Activated CD4-positive, alpha-beta T cell treated with anti-CD3 and anti-CD28 coated beads for 36 hours (primary cell): ENCODE measurements at regions of chr20 and their contacts with region 1.

Region 1: GRCh38 chr20:21505161-21505809 is 8.6 kb downstream of the NKX2-2 start:
- DNase-seq: peak; percentile 90
- ATAC-seq: peak; percentile 70
- H3K4me3 Mint-ChIP-seq: peak overlapping the region; percentile 52
- H3K27ac Mint-ChIP-seq: peak overlapping the region; percentile 8
- H3K4me1 Mint-ChIP-seq: peaks cover 25% of the 10 kb centered on the region
- H3K27me3 Mint-ChIP-seq: peaks cover 52% of the 10 kb centered on the region

Region 2: GRCh38 chr20:20837574-20838021 is 667.7 kb before region 1 on chr20:
- CTCF ChIA-PET with region 1: interaction called, 3 read pairs
- POLR2A ChIA-PET with region 1: no interaction called
- intact Hi-C with region 1: loop called (anchors 1 to 5 kb)
- DNase-seq: peak; percentile 74
- ATAC-seq: no peak
- H3K4me3 Mint-ChIP-seq: no peak overlapping the region
- H3K27ac Mint-ChIP-seq: no peak overlapping the region
- H3K4me1 Mint-ChIP-seq: peaks cover 3% of the 10 kb centered on the region
- H3K27me3 Mint-ChIP-seq: peaks cover 8% of the 10 kb centered on the region

Region 3: GRCh38 chr20:21099751-21100577 is 405.3 kb before region 1 on chr20:
- CTCF ChIA-PET with region 1: interaction called, 3 read pairs
- POLR2A ChIA-PET with region 1: no interaction called
- intact Hi-C with region 1: loop called (anchors 2 kb)
- DNase-seq: peak; percentile 71
- ATAC-seq: peak; percentile 53
- H3K4me3 Mint-ChIP-seq: peak overlapping the region; percentile 78
- H3K27ac Mint-ChIP-seq: peak overlapping the region; percentile 92
- H3K4me1 Mint-ChIP-seq: peaks cover 34% of the 10 kb centered on the region
- H3K27me3 Mint-ChIP-seq: peaks cover 68% of the 10 kb centered on the region

Region 4: DNA sequence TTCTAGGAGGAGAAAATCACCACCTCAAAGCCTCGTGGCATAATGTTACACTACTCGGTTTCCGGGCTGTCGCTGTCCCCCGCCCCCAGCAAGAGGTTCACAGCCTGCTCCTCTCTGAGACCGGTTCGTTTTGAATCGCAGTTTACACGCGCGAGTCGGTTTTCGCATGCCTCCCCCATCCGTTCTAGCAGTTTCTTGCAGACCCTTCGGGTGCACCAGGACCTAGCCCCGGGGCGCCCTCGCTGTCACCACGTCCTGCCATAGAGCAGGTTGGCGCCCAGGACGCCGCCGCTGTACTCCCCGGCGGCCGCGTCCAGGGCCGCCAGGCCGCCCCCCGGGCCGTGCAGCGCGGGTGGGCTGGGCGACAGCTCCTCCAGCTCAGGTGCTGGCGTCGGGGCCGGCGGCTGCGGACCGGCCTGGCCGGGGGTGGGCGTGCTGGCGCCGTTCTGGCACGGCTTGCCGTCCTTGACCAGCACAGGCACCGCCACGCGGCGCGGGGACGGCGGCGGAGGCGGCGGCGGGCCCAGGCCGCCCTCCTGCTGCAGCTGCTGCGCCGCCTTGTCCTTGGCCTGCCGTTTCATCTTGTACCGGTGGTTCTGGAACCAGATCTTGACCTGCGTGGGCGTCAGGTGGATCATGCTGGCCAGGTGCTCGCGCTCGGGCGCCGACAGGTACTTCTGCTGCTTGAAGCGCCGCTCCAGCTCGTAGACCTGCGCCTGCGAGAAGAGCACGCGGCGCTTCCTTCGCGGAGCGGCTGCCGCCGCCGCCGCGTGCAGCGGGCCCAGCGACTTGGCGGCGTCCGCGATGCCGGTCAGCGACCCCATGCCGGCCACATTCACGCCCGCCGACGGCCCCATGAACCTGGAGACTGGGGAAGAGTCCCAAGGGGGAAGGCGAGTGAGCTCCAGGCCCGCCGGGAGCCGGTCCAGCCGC is 109.4 kb before region 1 on chr20:
- CTCF ChIA-PET with region 1: interaction called, 5 read pairs
- POLR2A ChIA-PET with region 1: no interaction called
- intact Hi-C with region 1: loop called (anchors 2 to 5 kb)
- DNase-seq: peak; percentile 67
- ATAC-seq: peak; percentile 76
- H3K4me3 Mint-ChIP-seq: peak overlapping the region; percentile 40
- H3K27ac Mint-ChIP-seq: no peak overlapping the region
- H3K4me1 Mint-ChIP-seq: peaks cover 24% of the 10 kb centered on the region
- H3K27me3 Mint-ChIP-seq: peaks cover 62% of the 10 kb centered on the region

Region 5: DNA sequence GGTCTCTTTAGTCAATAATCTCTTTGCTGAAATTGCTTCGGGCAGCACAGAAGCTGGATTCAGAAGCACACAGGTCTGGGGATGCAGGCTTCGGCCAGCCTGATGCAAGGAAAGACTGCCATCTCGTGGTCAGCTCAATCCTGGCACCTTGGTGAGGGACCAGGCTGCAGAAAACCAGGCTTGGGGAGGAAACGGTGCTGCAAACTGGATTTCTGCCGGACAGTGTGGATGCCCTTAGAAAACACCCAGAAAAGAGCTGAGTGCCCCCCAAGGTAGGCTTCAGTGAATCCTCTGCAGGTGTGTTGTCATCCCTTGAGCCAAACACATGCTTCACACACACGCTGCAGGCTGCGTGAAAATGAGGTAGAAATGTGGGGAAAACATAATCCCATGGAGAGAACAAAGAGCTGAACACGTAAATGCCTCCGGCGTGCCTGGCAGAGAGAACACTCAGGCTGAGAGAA is 110.4 kb after region 1 on chr20:
- CTCF ChIA-PET with region 1: interaction called, 8 read pairs
- POLR2A ChIA-PET with region 1: no interaction called
- intact Hi-C with region 1: loop called in 1 of 2 experiments (anchors 5 kb)
- DNase-seq: peak; percentile 73
- ATAC-seq: peak; percentile 53
- H3K4me3 Mint-ChIP-seq: no peak overlapping the region
- H3K27ac Mint-ChIP-seq: no peak overlapping the region
- H3K4me1 Mint-ChIP-seq: no peaks in the 10 kb centered on the region
- H3K27me3 Mint-ChIP-seq: peaks cover 32% of the 10 kb centered on the region

Region 6: DNA sequence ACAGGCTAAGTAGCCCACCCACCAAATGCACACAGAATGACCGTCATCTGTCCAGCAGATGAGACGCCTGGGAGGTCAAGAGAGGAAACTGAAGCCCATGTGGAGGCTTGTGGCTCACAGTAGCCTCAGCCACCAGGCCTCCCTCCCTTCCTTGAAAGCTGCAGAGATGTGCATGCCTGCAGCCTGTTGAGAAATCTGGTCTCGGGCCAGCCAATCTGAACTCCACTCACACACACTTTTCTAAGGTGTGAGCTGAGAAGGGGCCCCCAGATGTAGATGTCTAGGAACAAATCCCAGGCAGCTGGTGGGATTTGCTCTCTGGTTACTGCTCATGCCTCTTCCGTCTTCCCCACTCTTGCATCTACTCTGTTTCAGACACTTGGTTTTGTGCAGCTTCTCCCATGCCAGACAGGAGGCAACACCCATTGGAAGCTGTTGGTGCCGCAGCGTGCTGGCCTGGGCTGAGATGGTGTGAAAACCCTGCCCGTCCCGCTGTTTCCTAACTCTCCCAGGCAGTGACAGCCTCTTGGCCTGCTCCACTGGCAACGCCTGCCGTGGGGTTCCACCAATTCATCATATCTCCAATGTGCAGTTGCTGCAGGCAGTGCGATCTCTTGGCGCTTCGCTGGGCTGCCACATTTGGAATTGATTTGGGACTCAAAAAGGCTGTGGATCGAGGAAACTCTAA is 176.1 kb after region 1 on chr20:
- CTCF ChIA-PET with region 1: no interaction called
- POLR2A ChIA-PET with region 1: no interaction called
- intact Hi-C with region 1: no loop called
- DNase-seq: no peak
- ATAC-seq: no peak
- H3K4me3 Mint-ChIP-seq: no peak overlapping the region
- H3K27ac Mint-ChIP-seq: no peak overlapping the region
- H3K4me1 Mint-ChIP-seq: no peaks in the 10 kb centered on the region
- H3K27me3 Mint-ChIP-seq: peaks cover 2% of the 10 kb centered on the region